H1 (cell line): ENCODE measurements at regions of chr17 and their contacts with region 1.

Region 1: DNA sequence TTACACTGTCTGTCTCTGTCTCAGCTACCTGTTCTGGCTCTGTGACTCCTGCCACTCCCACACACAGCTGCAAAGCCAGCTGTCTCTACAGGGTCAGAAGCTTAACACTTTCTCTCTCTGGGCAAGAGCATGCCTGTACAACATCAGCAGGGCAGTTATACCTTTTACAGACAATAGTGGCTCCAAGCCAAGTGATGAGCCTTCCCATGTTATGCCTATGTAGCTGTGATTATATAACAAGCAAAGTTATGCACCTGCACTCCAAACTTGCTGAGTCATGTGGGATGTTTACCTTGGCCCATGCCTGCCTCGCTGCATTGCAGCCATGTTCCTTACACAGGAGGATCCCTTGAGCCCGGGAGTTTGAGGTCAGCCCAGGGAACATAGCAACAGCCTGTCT is 31.8 kb upstream of the APPBP2 start:
- DNase-seq: no peak
- H3K4me3 ChIP-seq: no peak overlapping the region
- H3K27ac ChIP-seq: no peak overlapping the region
- H3K4me1 ChIP-seq: no peaks in the 10 kb centered on the region
- H3K27me3 ChIP-seq: no peaks in the 10 kb centered on the region
- CTCF ChIP-seq: no peak
- EP300 ChIP-seq: no peak
- POLR2A ChIP-seq: no peak
- RAD21 ChIP-seq: no peak

Region 2: GRCh38 chr17:60392042-60392844 is 165.6 kb before region 1 on chr17 and contains the start of gene USP32:
- CTCF ChIA-PET with region 1: no interaction called
- POLR2A ChIA-PET with region 1: no interaction called
- DNase-seq: peak; percentile 95 to 97
- H3K4me3 ChIP-seq: peak within 1 kb of the TSS; percentile 80 to 96 (median 90)
- H3K27ac ChIP-seq: peak within 1 kb of the TSS; percentile 97
- H3K4me1 ChIP-seq: peaks cover 0 to 13% (median 4%) of the 10 kb centered on the region in 4 experiments; a peak in 5 of 7 replicates
- H3K27me3 ChIP-seq: no peaks in the 10 kb centered on the region
- CTCF ChIP-seq: no peak
- EP300 ChIP-seq: 0 out of 3 replicates have a peak, but pooled peaks of 1 of the 2 experiments have one; percentile 7
- POLR2A ChIP-seq: peak; percentile 13 to 60; a peak in 2 of 3 replicates
- RAD21 ChIP-seq: no peak
- total RNA-seq, gene USP32: 109 and 112 TPM in 2 replicates

Region 3: GRCh38 chr17:60534613-60535157 is 23.1 kb before region 1 on chr17:
- CTCF ChIA-PET with region 1: no interaction called
- POLR2A ChIA-PET with region 1: no interaction called
- DNase-seq: no peak
- H3K4me3 ChIP-seq: no peak overlapping the region
- H3K27ac ChIP-seq: no peak overlapping the region
- H3K4me1 ChIP-seq: no peaks in the 10 kb centered on the region
- H3K27me3 ChIP-seq: no peaks in the 10 kb centered on the region
- CTCF ChIP-seq: no peak
- EP300 ChIP-seq: no peak
- POLR2A ChIP-seq: no peak
- RAD21 ChIP-seq: no peak

Region 4: DNA sequence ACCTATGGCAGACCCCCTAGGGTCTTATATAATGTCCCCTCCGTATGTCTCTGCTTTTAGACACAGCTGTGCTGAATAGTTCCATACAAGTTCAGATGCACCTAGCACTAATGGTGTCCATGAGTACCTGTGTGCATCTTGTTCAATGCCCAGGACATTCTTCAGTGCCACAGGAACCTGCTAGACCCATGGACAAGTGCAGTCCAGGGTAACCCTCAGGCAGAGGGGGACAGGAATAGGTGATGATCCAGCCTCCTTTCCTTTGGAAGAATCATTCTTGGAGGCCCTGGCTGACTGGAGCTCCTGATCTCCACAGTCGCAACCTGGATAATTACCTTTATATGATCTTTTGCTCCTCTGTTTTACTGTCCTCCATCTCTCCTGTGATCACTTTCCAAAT is 13.7 kb after region 1 on chr17:
- CTCF ChIA-PET with region 1: interaction called, 48 read pairs
- POLR2A ChIA-PET with region 1: no interaction called
- DNase-seq: no peak
- H3K4me3 ChIP-seq: no peak overlapping the region
- H3K27ac ChIP-seq: no peak overlapping the region
- H3K4me1 ChIP-seq: no peaks in the 10 kb centered on the region
- H3K27me3 ChIP-seq: no peaks in the 10 kb centered on the region
- CTCF ChIP-seq: no peak
- EP300 ChIP-seq: no peak
- POLR2A ChIP-seq: no peak
- RAD21 ChIP-seq: no peak